ENCODE measurements at regions of chr1 and their contacts with region 1.

Region 1: GRCh38 chr1:198175423-198176170 is 18.8 kb downstream of the NEK7 start:
- DNase-seq: peak in 2 of 9 experiments; percentile 47 to 67
- ATAC-seq: peak; percentile 79
- H3K4me3 ChIP-seq: peak overlapping the region in 1 of 2 experiments; percentile 15
- H3K4me3 Mint-ChIP-seq: peak overlapping the region; percentile 55
- H3K27ac ChIP-seq: peak overlapping the region; percentile 36 to 60
- H3K27ac Mint-ChIP-seq: peak overlapping the region; percentile 88
- H3K4me1 ChIP-seq: peaks cover 84% of the 10 kb centered on the region
- H3K4me1 Mint-ChIP-seq: peaks cover 89% of the 10 kb centered on the region
- H3K27me3 ChIP-seq: no peaks in the 10 kb centered on the region
- H3K27me3 Mint-ChIP-seq: no peaks in the 10 kb centered on the region
- CTCF ChIP-seq: no peak

Region 2: DNA sequence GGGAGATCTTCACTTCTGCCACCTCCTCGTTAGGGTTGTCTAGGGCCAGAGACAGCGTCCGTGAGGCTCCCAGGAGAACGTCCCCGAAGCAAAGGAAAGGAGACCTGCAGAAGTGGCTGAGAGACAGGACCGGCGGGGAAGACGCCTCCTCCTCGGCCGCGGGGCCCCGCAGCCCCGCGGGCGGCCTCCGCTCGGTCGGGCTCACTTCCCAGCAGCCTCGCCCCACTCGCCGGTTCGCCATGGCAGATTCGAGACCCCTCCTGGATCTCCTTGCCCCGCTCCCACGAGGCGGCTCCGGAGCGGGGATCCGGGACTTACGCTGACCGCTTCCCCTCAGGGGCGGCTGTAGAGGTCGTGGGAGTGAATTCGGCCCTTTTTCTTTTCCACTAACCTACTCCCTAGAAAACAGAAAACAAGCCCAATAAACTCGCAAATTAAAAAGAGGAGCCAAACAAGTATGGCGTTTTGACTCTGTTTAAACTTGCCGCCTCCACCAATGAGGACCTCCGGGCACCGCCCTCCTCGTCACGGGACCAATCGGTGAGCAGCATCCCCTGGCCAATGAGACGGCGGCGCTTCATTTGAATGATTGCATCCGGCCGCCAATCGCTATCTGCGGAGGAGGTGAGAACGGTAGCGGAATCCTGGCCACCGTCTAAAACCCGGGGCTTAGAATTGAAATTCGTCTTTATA is 1029.3 kb before region 1 on chr1 and contains the start of gene ASPM:
- CTCF ChIA-PET with region 1: no interaction called
- POLR2A ChIA-PET with region 1: no interaction called
- intact Hi-C with region 1: loop called in 1 of 2 experiments (anchors 10 kb)
- DNase-seq: peak; percentile 91 to 98 (median 92)
- ATAC-seq: peak; percentile 98
- H3K4me3 ChIP-seq: peak within 1 kb of the TSS; percentile 73 to 78
- H3K4me3 Mint-ChIP-seq: peak within 1 kb of the TSS; percentile 94
- H3K27ac ChIP-seq: peak within 1 kb of the TSS; percentile 29 to 68
- H3K27ac Mint-ChIP-seq: peak within 1 kb of the TSS; percentile 93
- H3K4me1 ChIP-seq: no peaks in the 10 kb centered on the region
- H3K4me1 Mint-ChIP-seq: peaks cover 15% of the 10 kb centered on the region
- H3K27me3 ChIP-seq: peaks cover 0 to 3% of the 10 kb centered on the region in 2 experiments
- H3K27me3 Mint-ChIP-seq: peaks cover 12% of the 10 kb centered on the region
- CTCF ChIP-seq: no peak
- total RNA-seq, gene ASPM: 0.14 to 0.30 TPM

Region 3: GRCh38 chr1:198187973-198188588 is 12.5 kb after region 1 on chr1:
- CTCF ChIA-PET with region 1: interaction called, 3 read pairs
- POLR2A ChIA-PET with region 1: interaction called, 4 read pairs
- intact Hi-C with region 1: loop called (anchors 1 to 2 kb)
- DNase-seq: peak in 6 of 9 experiments; percentile 27 to 79 (median 45)
- ATAC-seq: peak; percentile 87
- H3K4me3 ChIP-seq: no peak overlapping the region
- H3K4me3 Mint-ChIP-seq: peak overlapping the region; percentile 23
- H3K27ac ChIP-seq: peak overlapping the region in 1 of 2 experiments; percentile 78
- H3K27ac Mint-ChIP-seq: peak overlapping the region; percentile 81
- H3K4me1 ChIP-seq: peaks cover 64% of the 10 kb centered on the region
- H3K4me1 Mint-ChIP-seq: peaks cover 83% of the 10 kb centered on the region
- H3K27me3 ChIP-seq: no peaks in the 10 kb centered on the region
- H3K27me3 Mint-ChIP-seq: no peaks in the 10 kb centered on the region
- CTCF ChIP-seq: no peak

Region 4: DNA sequence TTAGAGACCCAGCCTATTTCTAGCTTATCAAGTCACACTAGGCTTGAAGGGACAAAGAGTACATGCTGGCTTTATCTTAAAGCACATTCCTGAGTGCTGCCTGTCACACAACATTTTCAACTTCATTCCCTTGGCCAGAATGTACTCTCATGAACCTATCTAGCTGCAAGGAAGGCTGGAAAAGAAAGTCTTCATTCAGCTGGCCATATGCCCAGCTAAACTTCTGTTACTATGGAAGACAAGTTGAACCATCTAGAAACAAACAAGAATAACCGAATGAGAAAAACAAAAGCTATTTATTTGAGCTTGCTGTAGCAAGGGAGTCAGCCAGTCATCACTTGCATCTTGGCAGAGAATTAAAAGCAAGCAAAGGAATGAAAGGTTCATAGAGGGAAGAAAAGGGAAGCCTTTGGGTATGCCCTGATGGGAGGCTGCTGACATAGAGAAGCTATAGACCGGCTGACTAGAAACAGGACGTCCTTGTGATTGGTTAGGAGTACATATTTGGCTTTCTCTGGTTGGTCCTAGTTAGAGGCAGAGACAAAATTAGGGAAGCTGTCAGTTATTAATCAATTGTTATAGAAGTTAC is 89.6 kb after region 1 on chr1:
- CTCF ChIA-PET with region 1: no interaction called
- POLR2A ChIA-PET with region 1: no interaction called
- intact Hi-C with region 1: no loop called
- DNase-seq: no peak
- ATAC-seq: no peak
- H3K4me3 ChIP-seq: no peak overlapping the region
- H3K4me3 Mint-ChIP-seq: no peak overlapping the region
- H3K27ac ChIP-seq: no peak overlapping the region
- H3K27ac Mint-ChIP-seq: no peak overlapping the region
- H3K4me1 ChIP-seq: no peaks in the 10 kb centered on the region
- H3K4me1 Mint-ChIP-seq: peaks cover 27% of the 10 kb centered on the region
- H3K27me3 ChIP-seq: no peaks in the 10 kb centered on the region
- H3K27me3 Mint-ChIP-seq: no peaks in the 10 kb centered on the region
- CTCF ChIP-seq: no peak

Region 5: GRCh38 chr1:198612471-198613260 is 437.1 kb after region 1 on chr1:
- CTCF ChIA-PET with region 1: no interaction called
- POLR2A ChIA-PET with region 1: no interaction called
- intact Hi-C with region 1: no loop called
- DNase-seq: peak in 2 of 9 experiments; percentile 44 to 67
- ATAC-seq: peak; percentile 50
- H3K4me3 ChIP-seq: peak overlapping the region; percentile 13 to 42
- H3K4me3 Mint-ChIP-seq: peak overlapping the region; percentile 83
- H3K27ac ChIP-seq: peak overlapping the region; percentile 54 to 85
- H3K27ac Mint-ChIP-seq: peak overlapping the region; percentile 98
- H3K4me1 ChIP-seq: peaks cover 65% of the 10 kb centered on the region
- H3K4me1 Mint-ChIP-seq: peaks cover 76% of the 10 kb centered on the region
- H3K27me3 ChIP-seq: no peaks in the 10 kb centered on the region
- H3K27me3 Mint-ChIP-seq: no peaks in the 10 kb centered on the region
- CTCF ChIP-seq: no peak

Measured in CD8-positive, alpha-beta T cell (primary cell).